ENCODE measurements at regions of chr7 and their contacts with region 1.

Region 1: DNA sequence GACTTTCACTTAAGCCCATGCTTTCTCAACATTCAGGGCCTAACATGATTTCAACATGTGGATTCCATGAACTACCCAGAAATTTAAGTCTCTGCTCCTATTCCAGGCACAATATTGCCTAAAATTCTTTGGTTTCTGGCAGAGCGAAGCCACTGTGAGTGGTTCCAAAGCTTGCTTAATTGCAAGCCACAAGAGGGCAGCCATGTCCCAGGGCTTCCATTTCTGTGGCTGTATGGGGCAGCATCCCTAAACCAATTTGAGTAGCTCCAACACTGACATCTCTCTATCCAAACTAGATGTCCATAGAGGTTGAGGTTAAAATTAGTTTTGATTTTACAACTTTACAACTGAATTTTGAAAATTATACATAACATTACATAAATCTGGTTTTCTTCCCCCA is 56.3 kb upstream of the MDFIC start:
- DNase-seq: peak; percentile 69
- ATAC-seq: peak; percentile 56
- H3K4me3 ChIP-seq: no peak overlapping the region
- H3K4me3 Mint-ChIP-seq: no peak overlapping the region
- H3K27ac ChIP-seq: no peak overlapping the region
- H3K27ac Mint-ChIP-seq: no peak overlapping the region
- H3K4me1 ChIP-seq: no peaks in the 10 kb centered on the region
- H3K4me1 Mint-ChIP-seq: no peaks in the 10 kb centered on the region
- H3K27me3 ChIP-seq: no peaks in the 10 kb centered on the region
- H3K27me3 Mint-ChIP-seq: no peaks in the 10 kb centered on the region
- CTCF ChIP-seq: peak; percentile 85

Region 2: GRCh38 chr7:114388021-114388420 is 477.5 kb before region 1 on chr7:
- CTCF ChIA-PET with region 1: no interaction called
- POLR2A ChIA-PET with region 1: no interaction called
- intact Hi-C with region 1: no loop called
- DNase-seq: no peak
- ATAC-seq: no peak
- H3K4me3 ChIP-seq: no peak overlapping the region
- H3K4me3 Mint-ChIP-seq: no peak overlapping the region
- H3K27ac ChIP-seq: no peak overlapping the region
- H3K27ac Mint-ChIP-seq: no peak overlapping the region
- H3K4me1 ChIP-seq: no peaks in the 10 kb centered on the region
- H3K4me1 Mint-ChIP-seq: no peaks in the 10 kb centered on the region
- H3K27me3 ChIP-seq: no peaks in the 10 kb centered on the region
- H3K27me3 Mint-ChIP-seq: no peaks in the 10 kb centered on the region
- CTCF ChIP-seq: no peak

Region 3: DNA sequence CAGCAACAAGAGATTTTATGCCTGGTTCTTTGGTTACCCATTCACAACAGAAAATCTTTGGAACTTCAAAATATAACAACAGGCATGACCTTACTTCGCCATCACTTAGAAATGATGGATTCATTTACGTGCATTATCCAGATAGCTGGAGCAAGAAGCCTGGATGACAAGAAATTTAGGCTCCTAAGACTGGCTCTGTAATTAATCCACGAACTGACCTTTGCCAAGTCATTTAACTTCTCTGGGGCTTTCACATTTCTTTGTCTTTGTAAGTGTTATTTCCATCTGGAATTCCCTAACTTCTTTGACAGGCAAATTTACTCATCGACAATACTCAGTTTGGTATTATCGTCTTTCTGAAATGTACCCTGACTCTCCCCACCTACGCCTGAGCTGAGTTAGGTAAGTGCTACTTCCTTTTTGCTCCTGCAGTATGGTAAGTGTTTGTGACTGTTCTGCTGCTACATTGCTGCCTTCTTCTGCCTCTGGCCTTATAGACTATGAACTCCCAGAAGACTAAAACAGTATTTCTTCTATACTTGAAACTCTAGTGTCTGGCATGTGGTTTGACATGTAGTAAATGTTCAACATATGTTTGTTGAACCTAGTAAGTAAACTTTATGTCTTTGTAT is 50.8 kb after region 1 on chr7:
- CTCF ChIA-PET with region 1: interaction called, 26 read pairs
- POLR2A ChIA-PET with region 1: no interaction called
- intact Hi-C with region 1: no loop called
- DNase-seq: peak; percentile 61
- ATAC-seq: peak; percentile 87
- H3K4me3 ChIP-seq: peak overlapping the region in 1 of 5 experiments; percentile 29
- H3K4me3 Mint-ChIP-seq: peak overlapping the region; percentile 72
- H3K27ac ChIP-seq: peak overlapping the region; percentile 47 to 77
- H3K27ac Mint-ChIP-seq: peak overlapping the region; percentile 88
- H3K4me1 ChIP-seq: peaks cover 20 to 33% of the 10 kb centered on the region in 2 donors
- H3K4me1 Mint-ChIP-seq: peaks cover 47% of the 10 kb centered on the region
- H3K27me3 ChIP-seq: no peaks in the 10 kb centered on the region
- H3K27me3 Mint-ChIP-seq: no peaks in the 10 kb centered on the region
- CTCF ChIP-seq: no peak

Region 4: DNA sequence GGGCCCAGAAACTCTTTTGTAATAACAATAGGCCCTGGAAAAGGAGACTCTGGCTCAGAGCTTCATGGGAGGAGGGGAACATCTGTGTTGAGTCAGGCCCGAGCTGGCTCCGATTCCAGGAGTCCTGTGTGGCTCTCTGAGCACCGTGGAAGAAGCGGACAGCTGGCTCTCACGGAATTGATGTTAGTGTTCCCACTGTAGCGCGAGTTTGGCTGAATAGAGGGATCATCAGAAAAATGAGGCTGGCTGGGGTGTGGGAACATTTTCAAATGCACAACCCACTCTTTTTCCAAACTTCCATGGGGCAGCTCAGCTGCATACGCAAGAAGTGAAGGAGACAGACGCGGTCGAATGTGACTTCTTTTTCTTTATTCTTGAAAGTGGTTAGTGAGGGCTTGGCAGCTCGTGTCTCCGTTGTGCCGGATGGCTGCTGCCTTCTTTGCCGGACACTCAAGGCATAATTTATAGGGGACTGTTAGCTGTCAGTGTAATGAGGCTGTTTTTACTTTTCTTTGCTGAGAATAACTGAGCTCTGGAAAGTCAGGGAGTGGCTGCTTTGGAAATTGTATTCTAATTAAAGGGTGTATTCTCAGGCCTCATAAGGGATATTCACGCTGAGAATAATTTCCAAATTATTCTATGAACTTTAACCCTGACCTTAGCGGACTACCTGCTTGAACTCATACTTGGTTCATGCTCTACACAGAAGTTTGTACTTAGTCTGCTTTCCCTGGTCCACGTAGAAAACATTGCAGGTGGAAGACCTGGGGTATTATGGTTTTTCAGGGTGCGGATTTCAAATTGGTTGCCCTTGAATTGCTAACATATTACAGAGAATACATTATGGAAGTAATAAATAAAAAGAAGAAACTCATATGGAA is 79.4 kb after region 1 on chr7:
- CTCF ChIA-PET with region 1: interaction called, 87 read pairs
- POLR2A ChIA-PET with region 1: no interaction called
- intact Hi-C with region 1: no loop called
- DNase-seq: no peak
- ATAC-seq: no peak
- H3K4me3 ChIP-seq: no peak overlapping the region
- H3K4me3 Mint-ChIP-seq: no peak overlapping the region
- H3K27ac ChIP-seq: no peak overlapping the region
- H3K27ac Mint-ChIP-seq: no peak overlapping the region
- H3K4me1 ChIP-seq: peaks cover 30 to 43% of the 10 kb centered on the region in 2 donors
- H3K4me1 Mint-ChIP-seq: peaks cover 59% of the 10 kb centered on the region
- H3K27me3 ChIP-seq: no peaks in the 10 kb centered on the region
- H3K27me3 Mint-ChIP-seq: no peaks in the 10 kb centered on the region
- CTCF ChIP-seq: no peak

Region 5: DNA sequence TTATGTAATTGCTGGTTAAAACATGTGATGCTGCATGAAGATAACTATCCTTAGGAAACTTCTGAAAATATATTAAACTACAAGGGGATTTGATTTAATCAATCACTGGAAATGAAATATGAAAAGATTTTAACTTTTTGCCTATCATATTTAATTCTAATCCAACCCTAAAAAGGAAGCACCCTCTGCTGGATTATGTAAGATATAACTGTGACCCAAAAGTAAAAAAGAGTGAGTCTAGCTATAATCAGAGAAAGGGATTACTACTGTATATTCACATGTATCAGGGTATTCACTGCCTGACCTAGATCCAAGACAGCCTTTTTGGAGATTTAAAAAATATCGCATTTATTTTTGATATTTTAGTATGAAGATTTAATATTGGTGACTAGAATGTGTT is 351.8 kb after region 1 on chr7:
- CTCF ChIA-PET with region 1: interaction called, 53 read pairs
- POLR2A ChIA-PET with region 1: no interaction called
- intact Hi-C with region 1: loop called (anchors 1 kb)
- DNase-seq: no peak
- ATAC-seq: no peak
- H3K4me3 ChIP-seq: no peak overlapping the region
- H3K4me3 Mint-ChIP-seq: no peak overlapping the region
- H3K27ac ChIP-seq: no peak overlapping the region
- H3K27ac Mint-ChIP-seq: no peak overlapping the region
- H3K4me1 ChIP-seq: no peaks in the 10 kb centered on the region
- H3K4me1 Mint-ChIP-seq: no peaks in the 10 kb centered on the region
- H3K27me3 ChIP-seq: no peaks in the 10 kb centered on the region
- H3K27me3 Mint-ChIP-seq: peaks cover 3% of the 10 kb centered on the region
- CTCF ChIP-seq: no peak

Region 6: GRCh38 chr7:115679976-115680375 is 814.4 kb after region 1 on chr7:
- CTCF ChIA-PET with region 1: interaction called, 11 read pairs
- POLR2A ChIA-PET with region 1: no interaction called
- intact Hi-C with region 1: loop called (anchors 10 kb)
- DNase-seq: peak; percentile 8
- ATAC-seq: no peak
- H3K4me3 ChIP-seq: no peak overlapping the region
- H3K4me3 Mint-ChIP-seq: no peak overlapping the region
- H3K27ac ChIP-seq: no peak overlapping the region
- H3K27ac Mint-ChIP-seq: no peak overlapping the region
- H3K4me1 ChIP-seq: no peaks in the 10 kb centered on the region
- H3K4me1 Mint-ChIP-seq: no peaks in the 10 kb centered on the region
- H3K27me3 ChIP-seq: no peaks in the 10 kb centered on the region
- H3K27me3 Mint-ChIP-seq: no peaks in the 10 kb centered on the region
- CTCF ChIP-seq: peak; percentile 18

Region 7: DNA sequence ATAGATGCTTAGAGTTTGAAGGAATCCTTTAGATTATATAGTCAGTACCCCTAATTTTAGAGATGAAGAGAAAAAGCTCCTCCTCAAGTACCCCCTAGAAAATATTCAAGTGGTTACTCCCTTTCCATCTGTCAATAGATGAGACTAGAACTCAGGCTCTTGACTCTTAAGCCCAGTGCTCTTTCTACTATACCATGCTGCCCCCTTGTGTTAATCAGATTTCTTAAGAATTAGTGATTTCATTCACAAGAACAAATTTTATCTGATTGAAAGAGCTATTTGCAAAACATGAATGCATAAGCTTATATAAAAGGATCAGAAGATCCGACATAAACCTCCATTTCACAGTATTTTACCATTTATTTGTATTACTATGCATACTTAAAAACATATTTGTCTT is 985.7 kb after region 1 on chr7:
- CTCF ChIA-PET with region 1: interaction called, 22 read pairs
- POLR2A ChIA-PET with region 1: no interaction called
- intact Hi-C with region 1: no loop called
- DNase-seq: peak; percentile 27
- ATAC-seq: no peak
- H3K4me3 ChIP-seq: no peak overlapping the region
- H3K4me3 Mint-ChIP-seq: no peak overlapping the region
- H3K27ac ChIP-seq: no peak overlapping the region
- H3K27ac Mint-ChIP-seq: no peak overlapping the region
- H3K4me1 ChIP-seq: no peaks in the 10 kb centered on the region
- H3K4me1 Mint-ChIP-seq: no peaks in the 10 kb centered on the region
- H3K27me3 ChIP-seq: no peaks in the 10 kb centered on the region
- H3K27me3 Mint-ChIP-seq: peaks cover 13% of the 10 kb centered on the region
- CTCF ChIP-seq: peak; percentile 31